ENCODE measurements at regions of chr10 and their contacts with region 1.

Region 1: DNA sequence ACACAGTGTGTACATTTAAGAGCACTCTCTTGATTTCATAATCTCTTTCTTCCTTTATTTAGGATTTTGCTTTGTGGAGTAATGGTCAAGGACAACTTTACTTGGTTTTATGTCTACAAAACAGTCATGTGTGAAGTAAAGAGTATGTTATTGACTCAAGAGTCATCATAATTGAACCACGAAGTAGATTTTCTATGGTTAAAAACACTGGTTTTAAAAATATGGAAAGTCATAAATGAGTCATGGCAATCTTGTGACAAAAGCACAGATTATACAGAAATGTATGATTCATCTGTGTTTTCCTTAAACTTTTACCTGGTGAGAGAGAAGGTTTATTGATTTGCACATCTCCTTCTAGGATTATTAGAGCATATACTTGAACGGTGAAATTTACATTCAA is 969.7 kb downstream of the GATA3 start:
- DNase-seq: no peak
- H3K4me3 Mint-ChIP-seq: no peak overlapping the region
- H3K27ac Mint-ChIP-seq: peak overlapping the region; percentile 88
- H3K4me1 Mint-ChIP-seq: peaks cover 74% of the 10 kb centered on the region
- H3K27me3 Mint-ChIP-seq: no peaks in the 10 kb centered on the region

Region 2: GRCh38 chr10:8990280-8990987 is 33.8 kb before region 1 on chr10:
- intact Hi-C with region 1: loop called (anchors 2 kb)
- DNase-seq: no peak
- H3K4me3 Mint-ChIP-seq: no peak overlapping the region
- H3K27ac Mint-ChIP-seq: peak overlapping the region; percentile 73
- H3K4me1 Mint-ChIP-seq: peaks cover 58% of the 10 kb centered on the region
- H3K27me3 Mint-ChIP-seq: no peaks in the 10 kb centered on the region

Region 3: GRCh38 chr10:9010093-9010492 is 14.1 kb before region 1 on chr10:
- intact Hi-C with region 1: loop called (anchors 1 kb)
- DNase-seq: peak; percentile 55
- H3K4me3 Mint-ChIP-seq: peak overlapping the region; percentile 5
- H3K27ac Mint-ChIP-seq: peak overlapping the region; percentile 84
- H3K4me1 Mint-ChIP-seq: peaks cover 79% of the 10 kb centered on the region
- H3K27me3 Mint-ChIP-seq: no peaks in the 10 kb centered on the region

Region 4: GRCh38 chr10:9043466-9043865 is 19.3 kb after region 1 on chr10:
- intact Hi-C with region 1: no loop called
- DNase-seq: no peak
- H3K4me3 Mint-ChIP-seq: no peak overlapping the region
- H3K27ac Mint-ChIP-seq: no peak overlapping the region
- H3K4me1 Mint-ChIP-seq: peaks cover 2% of the 10 kb centered on the region
- H3K27me3 Mint-ChIP-seq: no peaks in the 10 kb centered on the region

Region 5: GRCh38 chr10:9209105-9209798 is 185.0 kb after region 1 on chr10:
- intact Hi-C with region 1: loop called (anchors 5 kb)
- DNase-seq: peak; percentile 60
- H3K4me3 Mint-ChIP-seq: no peak overlapping the region
- H3K27ac Mint-ChIP-seq: peak overlapping the region; percentile 61
- H3K4me1 Mint-ChIP-seq: peaks cover 16% of the 10 kb centered on the region
- H3K27me3 Mint-ChIP-seq: no peaks in the 10 kb centered on the region

Region 6: GRCh38 chr10:9228771-9229170 is 204.6 kb after region 1 on chr10:
- intact Hi-C with region 1: loop called (anchors 5 kb)
- DNase-seq: no peak
- H3K4me3 Mint-ChIP-seq: no peak overlapping the region
- H3K27ac Mint-ChIP-seq: no peak overlapping the region
- H3K4me1 Mint-ChIP-seq: peaks cover 41% of the 10 kb centered on the region
- H3K27me3 Mint-ChIP-seq: peaks cover 7% of the 10 kb centered on the region

Region 7: GRCh38 chr10:9294865-9295264 is 270.7 kb after region 1 on chr10:
- intact Hi-C with region 1: loop called (anchors 10 kb)
- DNase-seq: no peak
- H3K4me3 Mint-ChIP-seq: no peak overlapping the region
- H3K27ac Mint-ChIP-seq: peak overlapping the region; percentile 71
- H3K4me1 Mint-ChIP-seq: peaks cover 27% of the 10 kb centered on the region
- H3K27me3 Mint-ChIP-seq: peaks cover 2% of the 10 kb centered on the region

Measured in activated T-helper 2 cell treated with anti-CD3 and anti-CD28 coated beads, Interferon-gamma antibody, Interleukin-2, Interleukin-4, amounts not matched to agents 10 μg/mL and 5 μg/mL and 100 μg/mL, durations not matched to agents 14 hours and 24 hours and 36 hours (primary cell).